Heart right ventricle (tissue), 16 donors: ENCODE measurements at regions of chr7 and their contacts with region 1.

Region 1: DNA sequence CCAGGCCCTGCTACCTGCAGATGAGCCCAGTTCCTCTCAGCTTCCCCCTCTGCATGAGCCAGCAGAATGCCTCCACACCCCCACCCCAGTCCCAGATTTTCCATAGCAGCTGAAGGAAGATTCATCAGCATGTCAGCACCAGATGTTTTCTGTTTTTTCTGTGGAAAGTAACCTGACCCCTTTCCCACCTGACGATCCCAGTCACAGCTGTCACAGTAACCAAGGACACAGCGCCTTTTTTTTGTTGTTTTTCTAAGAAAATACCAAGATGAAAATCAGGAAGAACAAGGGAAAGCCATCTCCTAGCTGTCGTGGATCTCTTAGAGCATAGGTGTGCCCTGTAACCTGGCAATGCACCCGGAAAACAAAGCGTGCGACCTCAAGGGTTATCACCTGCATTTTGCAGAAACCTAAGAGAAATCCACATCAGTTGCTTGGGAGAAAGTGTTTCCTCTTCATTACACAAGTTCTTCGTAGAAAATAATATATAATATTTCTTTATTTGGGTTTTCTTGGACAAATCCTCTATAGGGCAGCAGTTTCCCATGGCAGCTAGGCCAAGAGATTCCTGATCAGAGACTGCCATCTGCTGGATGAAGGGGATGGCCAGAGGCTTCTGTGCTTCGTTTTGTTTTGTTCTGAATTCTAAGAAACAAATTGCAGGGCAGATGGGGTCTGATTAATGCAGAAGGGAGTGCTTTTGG is 401.9 kb downstream of the TNS3 start:
- DNase-seq: peak in 1 of 2 donors; percentile 56
- ATAC-seq: peak; percentile 44 to 74 (median 61)
- H3K4me3 ChIP-seq: no peak overlapping the region
- H3K27ac ChIP-seq: no peak overlapping the region
- H3K4me1 ChIP-seq: peaks cover 7 to 51% (median 29%) of the 10 kb centered on the region in 9 donors
- H3K27me3 ChIP-seq: no peaks in the 10 kb centered on the region
- CTCF ChIP-seq: peak; percentile 55 to 91 (median 82)

Region 2: DNA sequence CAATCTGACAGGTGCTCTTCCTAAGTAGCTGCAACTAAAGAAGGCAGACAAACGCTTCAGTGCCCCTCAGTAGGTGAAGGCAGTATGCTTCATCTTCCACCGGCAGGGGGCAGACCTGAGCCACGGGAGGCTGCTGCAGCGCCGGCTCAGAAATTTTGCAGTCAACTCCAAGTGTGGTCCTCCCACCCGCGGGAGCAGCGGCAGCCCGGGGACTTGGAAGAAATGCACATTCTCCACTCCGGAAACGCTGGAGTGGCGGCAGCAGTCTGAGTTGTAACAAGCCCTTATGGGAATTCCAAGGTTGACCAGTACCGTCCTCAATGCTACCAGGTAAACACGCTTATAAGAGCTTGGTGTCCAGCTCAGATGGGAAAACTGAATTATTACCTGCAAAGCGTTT is 1262.3 kb before region 1 on chr7:
- intact Hi-C with region 1: loop called (anchors 1 to 10 kb)
- DNase-seq: peak; percentile 84 to 85
- ATAC-seq: peak in 7 of 8 donors; percentile 25 to 58 (median 57)
- H3K4me3 ChIP-seq: peak overlapping the region in 5 of 10 donors; percentile 63 to 77 (median 67)
- H3K27ac ChIP-seq: no peak overlapping the region
- H3K4me1 ChIP-seq: peaks cover 5 to 55% (median 30%) of the 10 kb centered on the region in 9 donors
- H3K27me3 ChIP-seq: peaks cover 0 to 55% (median 0%) of the 10 kb centered on the region in 7 donors
- CTCF ChIP-seq: peak; percentile 89 to 98 (median 96)

Region 3: DNA sequence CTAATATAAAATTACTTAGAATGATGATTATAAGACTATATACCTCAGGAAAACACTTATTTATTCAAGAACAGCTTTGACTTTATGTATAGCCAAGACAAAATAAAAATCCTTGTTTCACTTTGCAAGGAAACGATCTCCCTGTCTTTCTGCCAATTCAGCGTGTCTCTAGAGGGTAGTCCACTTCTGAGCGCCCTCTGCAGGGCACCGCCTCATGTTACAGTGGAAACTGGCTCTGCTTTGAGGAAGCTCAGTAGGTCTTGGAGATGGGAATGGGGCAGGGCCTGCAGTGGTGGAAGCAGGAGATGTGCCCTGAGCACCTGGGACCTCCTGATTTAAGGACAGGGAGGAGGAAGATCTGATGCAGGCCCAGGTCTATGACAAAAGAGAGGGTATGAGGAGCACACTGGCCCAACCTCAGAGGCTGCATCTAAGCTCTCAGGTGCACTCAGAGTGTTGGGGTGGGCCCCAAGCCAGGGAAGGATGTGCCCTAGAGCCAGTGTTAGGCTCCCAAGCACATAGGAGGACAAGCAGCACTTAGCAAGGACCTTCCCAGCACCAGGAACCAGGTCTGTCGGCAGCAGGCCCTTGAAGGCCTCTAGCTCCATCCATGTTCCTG is 79.0 kb before region 1 on chr7:
- intact Hi-C with region 1: loop called in 2 of 10 experiments (anchors 5 to 10 kb)
- DNase-seq: peak; percentile 37 to 55
- ATAC-seq: peak in 4 of 8 donors; percentile 48 to 71 (median 59)
- H3K4me3 ChIP-seq: no peak overlapping the region
- H3K27ac ChIP-seq: no peak overlapping the region
- H3K4me1 ChIP-seq: peaks cover 0 to 3% (median 0%) of the 10 kb centered on the region in 9 donors
- H3K27me3 ChIP-seq: no peaks in the 10 kb centered on the region
- CTCF ChIP-seq: peak in 7 of 9 donors; percentile 44 to 66 (median 54)

Region 4: DNA sequence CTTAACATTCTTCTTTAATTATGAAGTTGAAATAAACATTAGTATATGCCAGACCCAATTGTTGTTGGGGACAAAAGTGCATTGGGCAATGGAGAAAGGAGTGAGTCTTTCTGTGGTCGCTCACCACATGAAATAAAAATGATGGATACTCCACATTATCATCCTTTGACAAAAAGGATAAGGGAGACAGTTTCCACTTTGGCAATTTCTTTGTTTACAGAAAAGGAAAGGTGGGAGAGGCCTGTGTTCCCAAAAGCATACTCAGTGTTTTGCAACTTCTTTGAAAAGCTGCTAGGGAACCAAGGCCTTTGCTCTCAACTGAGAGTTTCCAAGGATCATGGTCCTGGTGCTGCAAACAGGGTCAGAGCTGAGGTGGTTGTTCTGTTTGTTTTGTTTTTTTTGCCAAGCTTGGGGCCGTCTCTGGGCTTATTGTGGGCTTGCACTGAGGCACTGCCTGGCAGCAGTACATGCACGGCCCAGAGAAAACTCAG is 60.0 kb after region 1 on chr7:
- intact Hi-C with region 1: loop called in 2 of 10 experiments (anchors 5 to 10 kb)
- DNase-seq: no peak
- ATAC-seq: peak in 3 of 8 donors; percentile 10 to 57 (median 37)
- H3K4me3 ChIP-seq: no peak overlapping the region
- H3K27ac ChIP-seq: peak overlapping the region in 1 of 10 donors; percentile 46
- H3K4me1 ChIP-seq: peaks cover 0 to 24% (median 4%) of the 10 kb centered on the region in 9 donors
- H3K27me3 ChIP-seq: no peaks in the 10 kb centered on the region
- CTCF ChIP-seq: no peak

Region 5: GRCh38 chr7:47531584-47532492 is 351.9 kb after region 1 on chr7:
- intact Hi-C with region 1: no loop called
- DNase-seq: no peak
- ATAC-seq: peak in 5 of 8 donors; percentile 13 to 47 (median 18)
- H3K4me3 ChIP-seq: no peak overlapping the region
- H3K27ac ChIP-seq: no peak overlapping the region
- H3K4me1 ChIP-seq: peaks cover 0 to 25% (median 5%) of the 10 kb centered on the region in 9 donors
- H3K27me3 ChIP-seq: peaks cover 0 to 4% (median 0%) of the 10 kb centered on the region in 7 donors
- CTCF ChIP-seq: no peak

Region 6: GRCh38 chr7:47574482-47575329 is 394.7 kb after region 1 on chr7:
- intact Hi-C with region 1: no loop called
- DNase-seq: peak in 1 of 2 donors; percentile 47
- ATAC-seq: no peak
- H3K4me3 ChIP-seq: no peak overlapping the region
- H3K27ac ChIP-seq: peak overlapping the region in 5 of 10 donors; percentile 33 to 92 (median 43)
- H3K4me1 ChIP-seq: peaks cover 12 to 100% (median 80%) of the 10 kb centered on the region in 9 donors
- H3K27me3 ChIP-seq: no peaks in the 10 kb centered on the region
- CTCF ChIP-seq: no peak